Right lobe of liver (tissue), 6 donors: ENCODE measurements at regions of chr4 and their contacts with region 1.

Region 1: DNA sequence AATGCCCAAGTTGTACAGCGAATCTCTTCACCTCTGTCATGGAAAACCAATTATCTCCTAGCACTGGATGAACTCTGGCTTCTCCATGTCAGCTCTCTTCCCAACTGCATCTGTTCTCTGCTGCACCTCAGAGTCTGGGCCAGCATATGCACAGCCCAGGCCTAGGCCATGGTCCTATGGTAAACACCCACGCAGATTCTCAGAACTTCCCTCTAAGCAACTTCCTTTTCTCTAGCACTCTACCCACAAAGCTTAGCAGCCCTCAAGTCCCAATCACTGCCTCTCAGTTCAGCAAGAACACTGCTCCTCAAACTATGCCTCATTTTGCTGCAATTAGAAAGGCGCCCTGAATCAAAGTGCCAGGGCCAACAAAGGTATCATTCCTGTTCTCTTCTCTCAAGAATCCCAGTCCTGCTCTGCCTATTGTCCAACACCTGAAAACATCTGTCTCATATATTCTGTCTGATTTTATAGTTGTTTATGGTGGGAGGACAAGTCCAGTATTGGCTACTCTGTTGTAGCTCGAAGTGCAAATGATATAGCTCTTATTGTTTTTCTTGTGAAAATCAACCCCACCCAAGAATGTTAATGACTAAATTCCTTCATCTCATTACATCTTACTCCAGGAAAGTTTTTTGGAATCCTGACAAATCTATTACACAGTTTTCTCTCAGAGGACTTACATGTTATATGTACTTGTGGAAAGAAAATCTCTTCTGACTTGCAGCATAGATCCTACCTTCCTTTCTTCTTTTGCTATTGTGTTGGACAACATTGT is 85.4 kb downstream of the DCHS2 start:
- DNase-seq: no peak
- ATAC-seq: peak in 2 of 4 donors; percentile 21 to 53
- H3K4me3 ChIP-seq: no peak overlapping the region
- H3K27ac ChIP-seq: no peak overlapping the region
- H3K4me1 ChIP-seq: no peaks in the 10 kb centered on the region
- H3K27me3 ChIP-seq: no peaks in the 10 kb centered on the region
- CTCF ChIP-seq: no peak
- POLR2A ChIP-seq: no peak

Region 2: DNA sequence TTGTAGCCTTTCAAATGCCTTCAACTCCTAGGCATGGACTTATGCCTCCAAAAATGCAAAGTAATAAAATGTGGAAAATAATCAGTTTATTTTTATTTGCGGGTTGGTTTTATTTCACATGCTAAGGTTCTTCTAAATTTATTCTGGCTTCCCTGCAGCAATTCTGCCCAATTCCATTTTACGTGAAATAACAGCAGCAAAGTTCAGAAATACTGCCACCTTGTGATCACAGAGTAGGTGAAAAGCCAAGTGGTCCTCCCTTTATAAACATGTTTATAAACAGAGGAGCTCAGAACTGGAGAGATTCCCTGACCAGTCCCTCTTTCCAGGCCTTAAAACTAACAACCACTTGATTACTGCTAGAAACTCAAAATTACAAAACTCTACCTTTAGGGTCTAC is 100.0 kb after region 1 on chr4:
- intact Hi-C with region 1: loop called in 1 of 2 experiments (anchors 5 kb)
- DNase-seq: no peak
- ATAC-seq: peak; percentile 75 to 86 (median 81)
- H3K4me3 ChIP-seq: no peak overlapping the region
- H3K27ac ChIP-seq: no peak overlapping the region
- H3K4me1 ChIP-seq: no peaks in the 10 kb centered on the region
- H3K27me3 ChIP-seq: no peaks in the 10 kb centered on the region
- CTCF ChIP-seq: peak; percentile 49 to 65 (median 60)
- POLR2A ChIP-seq: no peak